SK-N-SH (cell line): ENCODE measurements at regions of chr7 and their contacts with region 1.

Region 1: DNA sequence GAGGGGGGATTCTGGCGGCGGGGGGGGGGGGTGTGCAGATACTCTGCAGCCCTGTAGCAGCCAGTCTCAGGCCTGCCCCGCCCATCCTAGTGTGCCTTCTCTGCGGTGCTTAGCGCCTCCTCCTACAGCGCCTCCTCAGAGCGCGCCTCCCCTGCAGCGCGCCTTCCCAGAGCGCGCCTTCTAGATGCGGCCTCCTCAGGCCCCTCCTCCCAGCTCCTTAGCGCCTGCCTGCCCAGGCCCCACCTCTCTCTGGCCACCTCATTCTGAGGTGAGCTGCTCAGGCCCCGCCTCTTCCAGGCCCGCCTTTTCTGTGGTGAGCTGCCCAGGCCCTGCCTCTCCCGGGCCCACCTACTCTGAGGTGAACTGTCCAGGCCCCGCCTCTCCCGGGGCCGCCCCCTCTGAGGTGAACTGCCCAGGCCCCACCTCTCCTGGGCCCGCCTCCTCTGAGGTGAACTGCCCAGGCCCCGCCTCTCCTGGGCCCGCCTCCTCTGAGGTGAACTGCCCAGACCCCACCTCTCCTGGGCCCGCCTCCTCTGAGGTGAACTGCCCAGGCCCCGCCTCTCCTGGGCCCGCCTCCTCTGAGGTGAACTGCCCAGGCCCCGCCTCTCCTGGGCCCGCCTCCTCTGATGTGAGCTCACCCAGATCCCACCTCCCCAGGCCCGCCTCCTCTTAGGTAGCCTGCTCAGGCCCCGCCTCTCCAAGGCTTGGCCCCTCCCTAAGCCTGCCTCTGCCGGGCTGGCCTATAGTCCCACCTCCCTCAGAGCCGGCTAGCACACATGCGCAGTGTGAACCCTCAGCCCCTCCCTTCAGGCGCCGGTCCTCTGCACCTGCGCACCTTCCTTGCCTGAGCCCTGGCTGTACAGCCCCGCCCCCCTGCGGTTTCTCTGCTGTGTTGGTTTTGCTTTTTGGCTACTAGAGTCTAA is 2.1 kb upstream of the SGCE start:
- DNase-seq: peak; percentile 87
- H3K4me3 ChIP-seq: peak overlapping the region in 1 of 2 experiments; percentile 94; a peak in 2 of 4 replicates
- H3K27ac ChIP-seq: peak overlapping the region in 1 of 2 experiments; percentile 12; a peak in 1 of 4 replicates
- H3K4me1 ChIP-seq: peaks cover 10 to 15% of the 10 kb centered on the region in 2 experiments; a peak in 3 of 4 replicates
- H3K27me3 ChIP-seq: no peaks in the 10 kb centered on the region
- CTCF ChIP-seq: no peak
- EP300 ChIP-seq: no peak
- RAD21 ChIP-seq: peak; percentile 10; the same call in 1 of the 2 replicates

Region 2: DNA sequence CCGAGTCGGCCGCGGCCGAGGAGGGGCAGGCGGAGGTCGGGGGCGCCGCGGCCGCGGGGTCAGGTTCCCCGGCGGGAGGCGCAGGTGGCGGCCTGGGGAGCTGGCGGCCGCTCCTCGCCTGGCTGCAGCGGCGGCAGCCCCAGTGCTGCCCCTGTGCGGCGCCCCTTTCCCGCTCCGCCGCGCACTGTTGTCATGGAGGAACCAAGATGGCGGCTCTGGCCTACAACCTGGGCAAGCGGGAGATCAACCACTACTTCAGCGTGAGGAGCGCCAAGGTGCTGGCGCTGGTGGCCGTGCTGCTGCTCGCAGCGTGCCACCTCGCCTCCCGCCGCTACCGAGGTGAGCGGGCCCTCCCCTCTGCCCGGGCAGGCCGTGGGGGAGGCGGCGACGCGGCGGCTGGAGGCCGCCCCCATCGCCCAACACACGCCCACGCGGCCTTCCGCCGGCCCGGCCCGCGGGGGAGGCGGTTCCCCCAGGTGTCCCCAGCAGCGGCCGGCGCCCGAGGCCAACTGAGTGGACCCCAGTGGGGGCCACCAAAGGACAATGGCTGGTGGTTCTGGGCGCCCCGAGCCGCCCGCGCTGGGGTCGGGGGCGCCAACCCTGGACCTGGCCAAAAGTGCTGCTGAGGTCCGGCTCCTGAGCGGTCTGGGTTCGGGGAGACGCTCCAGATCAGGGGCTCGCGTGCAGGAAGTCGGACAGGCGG is 148.0 kb before region 1 on chr7:
- CTCF ChIA-PET with region 1: interaction called, 13 read pairs
- POLR2A ChIA-PET with region 1: interaction called, 3 read pairs
- DNase-seq: peak; percentile 96
- H3K4me3 ChIP-seq: peak overlapping the region; percentile 92 to 93
- H3K27ac ChIP-seq: peak overlapping the region; percentile 72 to 98
- H3K4me1 ChIP-seq: peaks cover 15 to 41% of the 10 kb centered on the region in 2 experiments; a peak in 3 of 4 replicates
- H3K27me3 ChIP-seq: no peaks in the 10 kb centered on the region
- CTCF ChIP-seq: no peak
- EP300 ChIP-seq: peak in 1 of 2 experiments; percentile 22; a peak in 1 of 4 replicates
- RAD21 ChIP-seq: peak; percentile 3; the same call in 1 of the 2 replicates

Region 3: GRCh38 chr7:94643771-94644540 is 14.1 kb before region 1 on chr7:
- CTCF ChIA-PET with region 1: interaction called, 10 read pairs
- POLR2A ChIA-PET with region 1: interaction called, 3 read pairs
- DNase-seq: no peak
- H3K4me3 ChIP-seq: no peak overlapping the region
- H3K27ac ChIP-seq: peak overlapping the region in 1 of 2 experiments; percentile 27; a peak in 3 of 4 replicates
- H3K4me1 ChIP-seq: peaks cover 2 to 29% of the 10 kb centered on the region in 2 experiments; a peak in 2 of 4 replicates
- H3K27me3 ChIP-seq: no peaks in the 10 kb centered on the region
- CTCF ChIP-seq: no peak
- EP300 ChIP-seq: no peak
- RAD21 ChIP-seq: no peak

Region 4: GRCh38 chr7:95199779-95200558 is 541.9 kb after region 1 on chr7:
- CTCF ChIA-PET with region 1: interaction called, 15 read pairs
- POLR2A ChIA-PET with region 1: no interaction called
- DNase-seq: peak; percentile 69
- H3K4me3 ChIP-seq: no peak overlapping the region; a peak in 1 of 4 replicates
- H3K27ac ChIP-seq: no peak overlapping the region
- H3K4me1 ChIP-seq: peaks cover 0 to 12% of the 10 kb centered on the region in 2 experiments; a peak in 2 of 4 replicates
- H3K27me3 ChIP-seq: peaks cover 7% of the 10 kb centered on the region; the same call in 1 of the 2 replicates
- CTCF ChIP-seq: peak; percentile 82
- EP300 ChIP-seq: no peak
- RAD21 ChIP-seq: peak; percentile 95